Endothelial cell of umbilical vein (primary cell): ENCODE measurements at regions of chr1 and their contacts with region 1.

Region 1: DNA sequence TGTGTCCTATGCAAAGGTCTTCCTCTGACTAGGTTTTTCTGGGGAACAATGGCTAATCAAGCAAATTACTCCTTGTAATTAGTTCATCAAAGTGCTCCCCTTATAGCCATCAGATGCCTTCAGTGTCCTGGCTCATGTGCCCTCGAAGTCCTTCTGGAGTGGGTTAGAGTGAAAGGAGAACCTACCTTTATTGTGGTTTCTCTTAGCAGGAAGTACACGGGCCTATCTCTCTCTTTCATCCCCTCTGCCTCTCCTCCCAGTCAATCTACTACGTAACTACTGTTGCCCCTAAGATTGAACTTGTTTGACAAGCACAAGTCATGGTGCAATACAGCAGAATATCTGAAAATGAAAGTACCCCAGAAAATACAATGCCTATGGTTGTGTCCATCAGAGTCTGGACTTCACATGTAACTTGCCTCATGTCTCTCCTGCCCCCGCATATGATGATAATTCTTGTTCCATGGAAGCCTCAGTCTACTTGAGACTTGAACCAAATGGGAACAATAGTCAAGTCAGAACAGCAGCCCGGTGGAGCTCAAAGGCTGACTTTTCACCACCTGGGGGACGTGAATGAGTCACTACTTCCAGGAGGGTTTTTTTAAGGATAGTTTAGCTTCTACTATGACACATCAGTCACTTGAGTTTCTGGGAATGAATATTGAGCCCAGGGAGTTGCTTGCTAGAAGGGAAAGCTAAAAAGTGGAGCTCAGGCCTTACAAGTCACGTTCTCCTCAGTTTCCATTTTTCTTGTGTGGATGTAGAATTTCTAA is 243.6 kb downstream of the TNR start:
- DNase-seq: peak; percentile 41
- H3K4me3 ChIP-seq: no peak overlapping the region
- H3K27ac ChIP-seq: peak overlapping the region; percentile 21
- H3K4me1 ChIP-seq: peaks cover 10% of the 10 kb centered on the region
- H3K27me3 ChIP-seq: peaks cover 11 to 12% of the 10 kb centered on the region in 2 experiments
- CTCF ChIP-seq: no peak
- POLR2A ChIP-seq: no peak

Region 2: GRCh38 chr1:175023043-175023921 is 476.5 kb before region 1 on chr1 and contains the start of gene MRPS14:
- CTCF ChIA-PET with region 1: no interaction called
- POLR2A ChIA-PET with region 1: no interaction called
- dilution Hi-C with region 1: no loop called
- intact Hi-C with region 1: loop called (anchors 10 kb)
- DNase-seq: peak; percentile 98
- H3K4me3 ChIP-seq: peak within 1 kb of the TSS; percentile 83 to 98 (median 96)
- H3K27ac ChIP-seq: peak within 1 kb of the TSS; percentile 68
- H3K4me1 ChIP-seq: peaks cover 12% of the 10 kb centered on the region
- H3K27me3 ChIP-seq: no peaks in the 10 kb centered on the region
- CTCF ChIP-seq: no peak
- POLR2A ChIP-seq: peak; percentile 77
- total RNA-seq, gene MRPS14: 31.6 and 31.8 TPM in 2 replicates